CD8-positive, alpha-beta memory T cell (primary cell): ENCODE measurements at regions of chr15 and their contacts with region 1.

Region 1: DNA sequence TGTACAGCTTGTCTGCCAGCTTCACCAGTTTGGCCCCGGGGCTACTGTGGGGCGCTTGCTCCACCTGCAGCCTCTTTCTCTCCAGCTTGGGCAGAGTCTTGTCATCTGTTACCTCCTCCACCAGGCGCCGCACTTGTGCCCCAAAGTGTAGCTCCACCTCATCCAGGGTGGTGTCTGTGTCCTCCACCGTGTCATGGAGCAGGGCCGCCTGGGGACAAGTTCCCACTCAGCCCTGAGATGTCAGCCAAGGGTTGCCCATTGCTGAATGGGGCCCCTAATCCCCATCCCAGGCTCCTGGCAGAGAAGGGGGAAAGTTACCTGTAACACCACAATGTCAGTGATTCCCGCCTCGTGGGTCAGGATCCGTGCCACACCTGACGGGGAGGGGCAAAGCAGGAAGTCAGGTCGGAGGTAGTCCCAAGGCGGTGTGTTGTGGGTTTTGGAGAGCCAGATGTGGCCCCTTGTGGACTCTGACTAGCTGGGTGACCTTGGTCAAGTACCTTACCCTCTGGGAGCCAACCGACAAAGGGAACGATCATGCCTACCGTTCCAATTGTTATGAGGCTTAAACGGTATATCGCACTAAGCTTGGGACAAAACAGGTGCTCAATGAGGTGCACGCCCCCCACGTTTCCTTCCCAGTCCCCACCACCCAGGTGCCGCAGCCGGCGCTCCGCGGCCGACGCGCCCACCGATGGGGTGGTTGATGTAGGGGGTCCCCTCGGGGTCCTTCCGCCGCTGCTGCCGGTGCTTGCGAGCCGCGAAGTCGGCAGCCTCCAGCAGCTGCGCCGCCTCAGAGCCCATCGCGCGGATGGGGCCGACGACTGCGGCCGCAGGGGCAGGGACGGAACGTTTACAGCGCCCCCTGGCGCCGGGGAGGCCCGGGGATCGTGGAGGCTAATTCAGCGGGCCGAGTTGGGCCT is at the start of gene HDDC3:
- DNase-seq: peak; percentile 81 to 91 (median 86)
- H3K4me3 ChIP-seq: peak within 1 kb of the TSS; percentile 99
- H3K4me3 Mint-ChIP-seq: peak within 1 kb of the TSS; percentile 88 to 99 (median 98)
- H3K27ac ChIP-seq: peak within 1 kb of the TSS; percentile 93
- H3K27ac Mint-ChIP-seq: peak within 1 kb of the TSS; percentile 95 to 99 (median 98)
- H3K4me1 ChIP-seq: peaks cover 60% of the 10 kb centered on the region
- H3K4me1 Mint-ChIP-seq: peaks cover 46 to 61% (median 53%) of the 10 kb centered on the region in 3 donors
- H3K27me3 ChIP-seq: no peaks in the 10 kb centered on the region
- H3K27me3 Mint-ChIP-seq: no peaks in the 10 kb centered on the region
- total RNA-seq, gene HDDC3: 39.5 to 43.5 TPM

Region 2: GRCh38 chr15:90886041-90886614 is 45.9 kb before region 1 on chr15:
- CTCF ChIA-PET with region 1: interaction called, 29 read pairs
- POLR2A ChIA-PET with region 1: interaction called, 5 read pairs
- DNase-seq: peak; percentile 63 to 80 (median 65)
- H3K4me3 ChIP-seq: no peak overlapping the region
- H3K4me3 Mint-ChIP-seq: peak overlapping the region in 3 of 7 donors; percentile 12 to 43 (median 25)
- H3K27ac ChIP-seq: no peak overlapping the region
- H3K27ac Mint-ChIP-seq: no peak overlapping the region
- H3K4me1 ChIP-seq: peaks cover 9% of the 10 kb centered on the region
- H3K4me1 Mint-ChIP-seq: peaks cover 10 to 27% (median 10%) of the 10 kb centered on the region in 3 donors
- H3K27me3 ChIP-seq: no peaks in the 10 kb centered on the region
- H3K27me3 Mint-ChIP-seq: peaks cover 19 to 21% of the 10 kb centered on the region in 2 donors

Region 3: DNA sequence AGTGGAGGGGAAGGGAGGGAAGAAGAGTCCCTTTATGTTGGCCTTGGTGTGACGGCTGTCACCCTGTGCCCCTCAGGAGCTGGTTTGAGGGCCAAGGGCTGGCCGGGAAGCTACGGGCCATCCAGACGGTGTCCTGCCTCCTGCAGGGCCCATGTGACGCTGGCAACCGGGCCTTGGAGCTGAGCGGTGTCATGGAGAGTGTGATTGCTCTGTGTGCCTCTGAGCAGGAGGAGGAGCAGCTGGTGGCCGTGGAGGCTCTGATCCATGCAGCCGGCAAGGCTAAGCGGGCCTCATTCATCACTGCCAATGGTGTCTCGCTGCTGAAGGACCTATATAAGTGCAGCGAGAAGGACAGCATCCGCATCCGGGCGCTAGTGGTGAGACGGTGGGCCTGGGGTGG is 14.5 kb after region 1 on chr15:
- CTCF ChIA-PET with region 1: interaction called, 158 read pairs
- POLR2A ChIA-PET with region 1: interaction called, 5 read pairs
- DNase-seq: no peak
- H3K4me3 ChIP-seq: no peak overlapping the region
- H3K4me3 Mint-ChIP-seq: no peak overlapping the region
- H3K27ac ChIP-seq: no peak overlapping the region
- H3K27ac Mint-ChIP-seq: peak overlapping the region in 1 of 8 donors; percentile 21
- H3K4me1 ChIP-seq: no peaks in the 10 kb centered on the region
- H3K4me1 Mint-ChIP-seq: no peaks in the 10 kb centered on the region
- H3K27me3 ChIP-seq: no peaks in the 10 kb centered on the region
- H3K27me3 Mint-ChIP-seq: no peaks in the 10 kb centered on the region

Region 4: DNA sequence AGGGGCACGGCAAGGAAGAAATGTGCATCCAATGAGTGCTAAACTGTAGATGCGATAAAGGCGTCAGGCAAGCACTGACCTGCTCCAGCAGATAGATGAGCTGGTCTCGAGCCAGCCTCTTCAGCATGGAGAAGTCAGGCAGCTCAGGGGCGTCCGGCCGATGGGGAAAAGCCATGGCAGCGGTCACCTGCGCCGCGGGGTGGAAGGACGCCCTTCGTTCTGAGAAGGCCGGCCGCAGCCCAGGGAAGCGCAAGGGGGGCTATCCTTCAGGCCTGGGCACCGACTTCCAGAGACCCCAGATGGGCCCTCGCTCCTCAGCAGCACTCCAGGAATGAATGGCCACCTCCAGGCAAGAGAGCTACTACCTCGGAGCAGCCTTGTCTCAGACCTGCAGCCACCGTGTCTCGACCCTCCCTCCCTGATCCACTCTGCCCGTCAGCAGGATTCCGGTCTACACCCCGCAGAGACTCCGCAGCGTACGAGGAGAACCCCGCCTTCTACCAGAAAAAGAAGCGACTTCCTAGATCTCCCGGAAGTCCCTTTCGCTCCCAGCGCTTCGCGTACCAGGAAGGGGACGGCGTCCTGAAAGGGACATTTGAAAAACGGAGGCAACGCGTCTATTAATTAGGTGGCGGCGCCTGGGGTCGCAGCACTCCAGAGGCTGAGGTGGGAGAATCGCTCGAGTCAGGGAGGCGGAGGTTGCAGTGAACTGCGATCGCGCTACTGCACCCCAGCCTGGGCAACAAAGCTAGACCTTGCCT is 90.3 kb after region 1 on chr15 and contains the start of gene VPS33B:
- CTCF ChIA-PET with region 1: interaction called, 12 read pairs
- POLR2A ChIA-PET with region 1: interaction called, 13 read pairs
- DNase-seq: peak; percentile 71 to 86 (median 78)
- H3K4me3 ChIP-seq: peak within 1 kb of the TSS; percentile 79
- H3K4me3 Mint-ChIP-seq: peak within 1 kb of the TSS; percentile 90 to 98 (median 95)
- H3K27ac ChIP-seq: peak within 1 kb of the TSS; percentile 85
- H3K27ac Mint-ChIP-seq: peak within 1 kb of the TSS; percentile 80 to 98 (median 92)
- H3K4me1 ChIP-seq: peaks cover 16% of the 10 kb centered on the region
- H3K4me1 Mint-ChIP-seq: peaks cover 41 to 54% (median 49%) of the 10 kb centered on the region in 3 donors
- H3K27me3 ChIP-seq: no peaks in the 10 kb centered on the region
- H3K27me3 Mint-ChIP-seq: no peaks in the 10 kb centered on the region
- total RNA-seq, gene VPS33B: 20.4 to 20.6 TPM

Region 5: GRCh38 chr15:91049378-91050127 is 117.6 kb after region 1 on chr15:
- CTCF ChIA-PET with region 1: interaction called, 10 read pairs
- POLR2A ChIA-PET with region 1: no interaction called
- DNase-seq: peak; percentile 12 to 67 (median 40)
- H3K4me3 ChIP-seq: no peak overlapping the region
- H3K4me3 Mint-ChIP-seq: peak overlapping the region in 2 of 7 donors; percentile 5 to 37
- H3K27ac ChIP-seq: no peak overlapping the region
- H3K27ac Mint-ChIP-seq: peak overlapping the region in 2 of 8 donors; percentile 6 to 86
- H3K4me1 ChIP-seq: peaks cover 18% of the 10 kb centered on the region
- H3K4me1 Mint-ChIP-seq: peaks cover 25 to 29% (median 28%) of the 10 kb centered on the region in 3 donors
- H3K27me3 ChIP-seq: peaks cover under 1% of the 10 kb centered on the region
- H3K27me3 Mint-ChIP-seq: peaks cover 9 to 24% of the 10 kb centered on the region in 2 donors

Region 6: DNA sequence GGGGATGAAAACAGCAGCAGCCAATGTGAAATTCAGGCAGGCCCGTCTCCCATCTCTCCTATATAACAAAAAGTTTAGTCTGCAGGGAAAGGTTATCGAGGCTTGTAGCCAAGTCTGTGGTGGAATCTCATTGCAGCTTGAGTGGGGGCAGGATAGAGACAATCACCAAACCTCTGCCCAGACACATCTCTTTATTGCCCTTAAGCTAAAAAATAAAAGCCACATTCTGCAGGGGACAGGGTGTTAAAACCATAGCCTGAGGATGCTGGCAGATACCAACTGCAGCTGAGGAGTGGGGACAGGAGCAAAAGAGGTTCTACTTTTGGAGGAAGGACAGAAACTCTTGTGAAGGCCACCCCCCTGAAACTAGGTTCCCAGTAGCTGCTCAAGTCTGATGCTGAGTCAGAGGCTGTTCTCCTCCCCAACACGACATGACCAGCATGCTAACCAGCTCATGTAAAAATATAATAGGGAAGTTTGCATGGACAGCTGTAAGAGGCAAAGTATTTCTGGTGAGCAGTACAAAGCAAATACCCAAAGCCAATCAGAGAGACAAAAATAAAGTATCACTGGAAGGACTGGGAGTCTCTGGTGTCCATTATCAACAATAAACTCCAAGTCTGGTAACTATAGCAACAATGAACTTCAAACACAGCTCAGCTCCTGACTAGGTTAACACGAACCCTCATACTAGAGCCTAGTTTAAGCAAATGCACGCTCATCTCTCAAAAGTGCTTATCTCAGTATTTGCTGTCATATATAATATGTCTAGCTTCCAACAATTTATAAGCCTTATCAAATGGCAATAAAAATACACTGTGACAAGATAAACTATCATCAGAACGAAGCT is 559.3 kb after region 1 on chr15:
- CTCF ChIA-PET with region 1: no interaction called
- POLR2A ChIA-PET with region 1: no interaction called
- DNase-seq: peak in 2 of 5 donors; percentile 1 to 49
- H3K4me3 ChIP-seq: no peak overlapping the region
- H3K4me3 Mint-ChIP-seq: peak overlapping the region in 4 of 7 donors; percentile 3 to 52 (median 43)
- H3K27ac ChIP-seq: no peak overlapping the region
- H3K27ac Mint-ChIP-seq: peak overlapping the region; percentile 13 to 86 (median 81)
- H3K4me1 ChIP-seq: no peaks in the 10 kb centered on the region
- H3K4me1 Mint-ChIP-seq: peaks cover 15 to 32% (median 31%) of the 10 kb centered on the region in 3 donors
- H3K27me3 ChIP-seq: no peaks in the 10 kb centered on the region
- H3K27me3 Mint-ChIP-seq: peaks cover 0 to 11% of the 10 kb centered on the region in 2 donors